ENCODE measurements at regions of chr17 and their contacts with region 1.

Region 1: GRCh38 chr17:32783602-32784001 is 93.3 kb downstream of the MYO1D start:
- DNase-seq: peak; percentile 36
- ATAC-seq: peak; percentile 88
- H3K4me3 ChIP-seq: no peak overlapping the region
- H3K27ac ChIP-seq: no peak overlapping the region
- H3K4me1 ChIP-seq: no peaks in the 10 kb centered on the region
- H3K27me3 ChIP-seq: peaks cover 5% of the 10 kb centered on the region
- CTCF ChIP-seq: peak; percentile 69; the same call in 1 of the 2 replicates

Region 2: GRCh38 chr17:32877164-32877764 is 93.7 kb after region 1 on chr17:
- CTCF ChIA-PET with region 1: interaction called, 16 read pairs
- POLR2A ChIA-PET with region 1: no interaction called
- in situ Hi-C with region 1: no loop called
- intact Hi-C with region 1: loop called (anchors 2 kb)
- DNase-seq: peak; percentile 18
- ATAC-seq: peak; percentile 100
- H3K4me3 ChIP-seq: peak overlapping the region; percentile 59 to 67
- H3K27ac ChIP-seq: no peak overlapping the region
- H3K4me1 ChIP-seq: peaks cover 3% of the 10 kb centered on the region; the same call in 1 of the 2 replicates
- H3K27me3 ChIP-seq: peaks cover 20% of the 10 kb centered on the region
- CTCF ChIP-seq: peak; percentile 98

Region 3: DNA sequence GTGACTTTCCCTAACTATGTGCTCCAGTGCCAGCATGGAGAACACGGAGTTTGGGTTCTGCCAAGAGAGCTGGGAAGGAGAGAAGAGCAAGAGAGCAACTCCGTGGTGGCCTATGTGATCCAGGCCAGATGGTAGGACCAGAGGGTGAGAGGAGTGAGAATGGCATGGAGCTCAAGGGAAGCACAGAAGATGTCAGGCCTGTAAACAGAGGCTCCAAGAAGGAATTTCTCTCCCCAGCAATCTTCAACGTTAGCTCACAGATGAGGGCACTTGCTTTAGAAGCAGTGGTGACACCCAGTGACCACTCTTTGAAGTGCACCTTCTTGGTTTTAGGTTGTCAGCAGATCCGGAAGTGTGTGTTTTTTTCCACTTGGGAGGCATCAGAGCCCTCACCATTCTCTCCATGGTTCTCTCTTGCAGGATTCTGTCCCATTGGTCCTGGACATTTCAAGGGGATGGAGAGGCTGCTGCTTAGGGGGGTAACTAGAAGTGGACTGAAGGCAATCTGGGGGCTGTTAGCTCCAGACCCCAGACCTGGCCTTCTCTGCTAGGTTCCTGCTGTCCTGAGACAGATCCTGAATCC is 126.3 kb after region 1 on chr17:
- CTCF ChIA-PET with region 1: interaction called, 4 read pairs
- POLR2A ChIA-PET with region 1: no interaction called
- in situ Hi-C with region 1: no loop called
- intact Hi-C with region 1: loop called (anchors 2 kb)
- DNase-seq: peak; percentile 41
- ATAC-seq: peak; percentile 90
- H3K4me3 ChIP-seq: no peak overlapping the region
- H3K27ac ChIP-seq: no peak overlapping the region
- H3K4me1 ChIP-seq: no peaks in the 10 kb centered on the region
- H3K27me3 ChIP-seq: peaks cover 12% of the 10 kb centered on the region; the same call in 1 of the 2 replicates
- CTCF ChIP-seq: peak; percentile 74

Region 4: DNA sequence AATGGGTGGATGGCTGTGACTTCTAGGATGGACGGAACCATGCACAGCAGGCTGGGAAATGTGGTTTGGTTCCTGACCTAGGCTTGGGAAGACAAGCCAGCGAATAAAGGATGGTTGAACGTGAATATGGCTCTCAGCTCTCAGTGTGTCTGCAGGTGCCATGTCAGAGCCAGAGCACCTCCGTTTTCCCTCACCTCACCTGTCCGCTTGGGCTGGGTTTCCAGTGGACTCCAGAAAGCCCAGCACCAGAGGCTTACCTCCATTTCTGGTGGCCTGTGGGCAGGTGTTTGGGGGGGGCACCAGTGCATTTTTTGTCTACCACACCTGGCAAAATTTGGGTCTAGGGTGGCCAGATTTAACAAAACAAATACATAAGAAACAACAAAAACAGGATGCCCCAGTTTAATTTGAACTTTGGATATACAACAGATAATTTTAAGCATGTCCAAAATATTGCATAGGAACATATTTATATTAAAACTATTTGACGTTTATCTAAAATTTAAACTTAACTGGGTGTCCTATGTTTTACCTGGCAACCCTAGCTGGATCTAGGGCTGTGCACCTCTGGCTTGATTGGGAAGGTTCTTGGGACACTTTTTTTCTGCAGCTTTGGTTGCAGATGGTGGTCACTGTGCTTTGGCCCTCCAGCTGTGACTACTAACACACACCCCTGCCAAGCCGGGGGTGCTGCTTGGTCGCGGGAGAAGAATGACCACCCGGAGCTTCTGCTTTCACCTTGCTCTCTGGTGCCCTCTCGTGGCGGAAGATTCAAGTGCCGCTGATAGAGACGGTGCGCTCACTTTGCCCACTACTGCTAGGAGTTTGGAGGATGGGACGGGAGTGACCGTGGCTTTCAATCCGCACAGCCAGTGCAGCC is 214.4 kb after region 1 on chr17:
- CTCF ChIA-PET with region 1: no interaction called
- POLR2A ChIA-PET with region 1: no interaction called
- in situ Hi-C with region 1: no loop called
- intact Hi-C with region 1: loop called (anchors 2 kb)
- DNase-seq: peak; percentile 50
- ATAC-seq: peak; percentile 92
- H3K4me3 ChIP-seq: peak overlapping the region in 1 of 2 experiments; percentile 2; a peak in 1 of 4 replicates
- H3K27ac ChIP-seq: no peak overlapping the region
- H3K4me1 ChIP-seq: no peaks in the 10 kb centered on the region
- H3K27me3 ChIP-seq: 0 out of 2 replicates have a peak, but pooled peaks cover 2% of the 10 kb centered on the region
- CTCF ChIP-seq: peak; percentile 92

Region 5: GRCh38 chr17:33750943-33751701 is 967.5 kb after region 1 on chr17:
- CTCF ChIA-PET with region 1: no interaction called
- POLR2A ChIA-PET with region 1: no interaction called
- in situ Hi-C with region 1: no loop called
- intact Hi-C with region 1: loop called (anchors 10 kb)
- DNase-seq: peak; percentile 39
- ATAC-seq: peak; percentile 91
- H3K4me3 ChIP-seq: 0 out of 4 replicates have a peak overlapping the region, but pooled peaks of 1 of the 2 experiments have one; percentile 6
- H3K27ac ChIP-seq: no peak overlapping the region
- H3K4me1 ChIP-seq: peaks cover 4% of the 10 kb centered on the region
- H3K27me3 ChIP-seq: peaks cover 8% of the 10 kb centered on the region
- CTCF ChIP-seq: peak; percentile 93